Activated CD4-positive, alpha-beta memory T cell treated with anti-CD3 and anti-CD28 coated beads for 36 hours (primary cell): ENCODE measurements at regions of chr3 and their contacts with region 1.

Region 1: DNA sequence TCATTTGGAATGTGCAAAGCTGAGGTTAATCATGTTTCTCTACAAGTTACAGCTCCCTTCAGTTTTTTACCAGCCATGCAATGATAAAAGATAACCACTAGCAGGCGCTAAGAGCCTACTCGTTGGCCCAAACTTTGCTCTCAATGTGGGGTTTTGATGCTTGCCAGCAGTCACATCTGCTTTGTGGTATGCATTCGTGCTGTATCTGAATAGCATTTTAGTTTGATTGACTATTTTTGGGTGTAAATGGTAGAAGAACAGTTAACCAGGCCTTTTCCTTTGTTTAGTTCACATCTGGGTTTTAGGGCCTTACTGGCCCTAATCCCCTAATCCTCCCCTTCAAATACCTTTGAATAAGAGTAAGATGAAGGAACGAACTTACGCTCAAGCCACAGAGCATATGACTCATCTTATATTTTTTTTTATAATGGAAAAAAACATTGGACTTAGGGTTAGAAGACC is 4.4 kb upstream of the CLDN11 start:
- DNase-seq: peak; percentile 45
- H3K4me3 Mint-ChIP-seq: no peak overlapping the region
- H3K27ac Mint-ChIP-seq: no peak overlapping the region
- H3K4me1 Mint-ChIP-seq: peaks cover 8% of the 10 kb centered on the region
- H3K27me3 Mint-ChIP-seq: peaks cover 20% of the 10 kb centered on the region

Region 2: DNA sequence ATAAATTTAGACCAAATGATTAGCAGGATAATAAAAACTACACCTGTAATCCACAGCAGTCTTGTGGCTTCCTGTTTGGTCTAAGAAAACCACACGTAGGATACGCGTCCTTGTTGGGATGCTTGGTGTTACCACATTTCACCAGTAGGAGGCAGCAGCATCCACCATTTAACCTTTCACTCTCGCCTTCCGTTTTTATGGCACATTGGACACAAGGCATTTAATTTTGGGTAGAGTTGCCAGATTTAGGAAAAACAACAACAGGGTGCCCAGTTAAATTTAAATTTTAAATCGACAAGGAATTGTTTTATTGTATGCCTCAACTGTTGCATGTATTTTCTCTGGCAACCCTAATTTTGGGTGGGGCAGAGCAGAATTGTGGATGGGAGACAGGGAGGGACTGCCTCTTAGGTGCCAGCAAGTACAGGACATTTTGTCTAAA is 550.8 kb before region 1 on chr3:
- CTCF ChIA-PET with region 1: interaction called, 7 read pairs
- POLR2A ChIA-PET with region 1: no interaction called
- intact Hi-C with region 1: loop called (anchors 10 kb)
- DNase-seq: peak; percentile 79
- H3K4me3 Mint-ChIP-seq: no peak overlapping the region
- H3K27ac Mint-ChIP-seq: no peak overlapping the region
- H3K4me1 Mint-ChIP-seq: peaks cover 8% of the 10 kb centered on the region
- H3K27me3 Mint-ChIP-seq: peaks cover 10% of the 10 kb centered on the region

Region 3: DNA sequence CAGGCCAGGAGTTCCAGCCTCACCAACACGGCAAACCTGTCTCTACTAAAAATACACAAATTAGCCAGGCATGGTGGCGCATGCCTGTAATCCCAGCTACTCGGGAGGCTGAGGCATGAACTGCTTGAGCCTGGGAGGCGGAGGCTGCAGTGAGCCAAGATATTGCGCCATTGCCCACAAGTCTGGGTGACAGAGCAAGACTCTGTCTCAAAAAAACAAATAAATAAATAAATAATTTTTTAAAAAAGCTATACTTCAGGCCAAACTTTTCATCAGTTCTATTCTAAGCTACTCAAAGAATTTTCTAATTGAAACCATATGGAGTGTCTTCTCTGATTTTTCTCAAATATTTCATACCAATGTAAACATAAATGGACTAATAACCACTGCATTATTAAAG is 276.2 kb before region 1 on chr3:
- CTCF ChIA-PET with region 1: no interaction called
- POLR2A ChIA-PET with region 1: no interaction called
- intact Hi-C with region 1: no loop called
- DNase-seq: no peak
- H3K4me3 Mint-ChIP-seq: no peak overlapping the region
- H3K27ac Mint-ChIP-seq: no peak overlapping the region
- H3K4me1 Mint-ChIP-seq: peaks cover 21% of the 10 kb centered on the region
- H3K27me3 Mint-ChIP-seq: no peaks in the 10 kb centered on the region

Region 4: GRCh38 chr3:170307671-170308403 is 106.4 kb before region 1 on chr3:
- CTCF ChIA-PET with region 1: interaction called, 5 read pairs
- POLR2A ChIA-PET with region 1: no interaction called
- intact Hi-C with region 1: loop called (anchors 5 kb)
- DNase-seq: no peak
- H3K4me3 Mint-ChIP-seq: no peak overlapping the region
- H3K27ac Mint-ChIP-seq: no peak overlapping the region
- H3K4me1 Mint-ChIP-seq: no peaks in the 10 kb centered on the region
- H3K27me3 Mint-ChIP-seq: no peaks in the 10 kb centered on the region

Region 5: DNA sequence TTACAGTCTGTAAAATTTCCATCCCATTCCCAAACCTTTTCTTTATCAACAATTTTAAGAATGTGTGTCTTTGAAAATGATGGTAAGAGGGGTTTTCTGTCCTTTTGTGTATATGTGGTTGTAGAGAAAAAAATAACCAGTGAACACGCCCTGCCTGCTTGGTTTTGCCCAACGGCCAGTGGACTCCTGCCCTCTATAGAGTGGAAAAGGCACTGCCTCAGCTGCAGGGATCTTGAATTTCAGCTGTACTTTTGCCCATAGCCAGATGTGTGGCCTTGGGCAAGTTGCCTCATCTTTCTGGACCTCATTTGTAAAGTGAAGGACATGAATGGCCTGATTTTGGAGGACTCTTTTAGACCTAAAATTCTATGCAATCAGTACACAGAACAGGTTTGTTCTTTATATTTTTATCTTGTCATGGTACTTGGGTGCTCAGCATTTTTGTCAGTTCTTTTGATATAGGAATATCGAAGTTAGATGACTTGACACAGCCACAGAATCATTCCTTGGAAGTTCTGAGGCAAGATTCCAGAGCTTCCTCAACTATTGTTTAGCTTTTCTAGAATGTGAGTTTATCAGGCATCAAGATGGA is 85.4 kb after region 1 on chr3:
- CTCF ChIA-PET with region 1: interaction called, 14 read pairs
- POLR2A ChIA-PET with region 1: no interaction called
- intact Hi-C with region 1: loop called (anchors 5 kb)
- DNase-seq: peak; percentile 24
- H3K4me3 Mint-ChIP-seq: no peak overlapping the region
- H3K27ac Mint-ChIP-seq: no peak overlapping the region
- H3K4me1 Mint-ChIP-seq: no peaks in the 10 kb centered on the region
- H3K27me3 Mint-ChIP-seq: no peaks in the 10 kb centered on the region

Region 6: GRCh38 chr3:170689893-170690660 is 275.8 kb after region 1 on chr3:
- CTCF ChIA-PET with region 1: interaction called, 23 read pairs
- POLR2A ChIA-PET with region 1: interaction called, 3 read pairs
- intact Hi-C with region 1: loop called (anchors 1 kb)
- DNase-seq: peak; percentile 59
- H3K4me3 Mint-ChIP-seq: no peak overlapping the region
- H3K27ac Mint-ChIP-seq: no peak overlapping the region
- H3K4me1 Mint-ChIP-seq: peaks cover 2% of the 10 kb centered on the region
- H3K27me3 Mint-ChIP-seq: no peaks in the 10 kb centered on the region

Region 7: GRCh38 chr3:170848292-170848917 is 434.2 kb after region 1 on chr3:
- CTCF ChIA-PET with region 1: interaction called, 10 read pairs
- POLR2A ChIA-PET with region 1: no interaction called
- intact Hi-C with region 1: no loop called
- DNase-seq: no peak
- H3K4me3 Mint-ChIP-seq: no peak overlapping the region
- H3K27ac Mint-ChIP-seq: no peak overlapping the region
- H3K4me1 Mint-ChIP-seq: no peaks in the 10 kb centered on the region
- H3K27me3 Mint-ChIP-seq: peaks cover 16% of the 10 kb centered on the region